Activated CD8-positive, alpha-beta T cell treated with anti-CD3 and anti-CD28 coated beads for 36 hours (primary cell): ENCODE measurements at regions of chr19 and their contacts with region 1.

Region 1: DNA sequence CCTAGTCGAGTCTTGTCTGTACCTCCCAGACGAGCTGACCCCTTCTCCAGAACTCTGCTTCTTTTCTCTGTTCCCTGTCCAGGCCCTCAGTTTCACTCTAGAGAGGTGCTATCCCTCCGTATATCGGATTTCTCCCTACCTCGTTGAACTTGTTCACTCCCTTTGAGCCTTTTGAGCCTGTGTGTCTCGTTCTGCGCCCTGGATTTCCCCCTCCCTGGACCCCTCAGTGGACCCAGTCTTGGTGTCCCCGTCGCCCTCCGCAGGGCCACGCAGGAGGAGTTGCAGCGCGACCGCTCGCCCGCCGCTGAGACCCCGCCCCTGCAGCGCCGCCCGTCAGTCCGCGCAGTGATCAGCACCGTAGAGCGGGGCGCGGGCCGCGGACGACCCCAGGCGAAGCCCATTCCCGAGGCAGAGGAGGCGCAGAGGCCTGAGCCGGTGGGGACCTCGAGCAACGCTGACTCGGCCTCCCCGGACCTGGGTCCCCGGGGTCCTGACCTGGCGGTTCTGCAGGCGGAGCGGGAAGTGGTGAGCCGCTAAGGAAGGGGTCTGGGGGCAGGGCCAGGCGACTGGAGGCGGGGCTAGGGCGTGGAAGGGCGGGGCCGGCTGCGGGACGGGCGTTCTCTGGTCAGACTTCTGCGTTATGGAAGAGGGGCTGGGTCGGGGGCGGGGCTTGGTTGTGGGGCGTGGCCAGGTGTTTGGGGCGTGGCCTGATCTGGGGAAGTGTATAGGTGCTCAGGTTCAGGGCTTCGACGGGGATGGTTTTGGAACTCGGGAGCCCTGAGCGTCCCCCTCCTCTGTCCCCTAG is 5.5 kb downstream of the EPS8L1 start:
- DNase-seq: peak; percentile 94
- ATAC-seq: peak; percentile 82
- H3K4me3 Mint-ChIP-seq: peak overlapping the region; percentile 62
- H3K27ac Mint-ChIP-seq: no peak overlapping the region
- H3K4me1 Mint-ChIP-seq: peaks cover 19% of the 10 kb centered on the region
- H3K27me3 Mint-ChIP-seq: peaks cover 58% of the 10 kb centered on the region
- CTCF ChIP-seq: no peak

Region 2: DNA sequence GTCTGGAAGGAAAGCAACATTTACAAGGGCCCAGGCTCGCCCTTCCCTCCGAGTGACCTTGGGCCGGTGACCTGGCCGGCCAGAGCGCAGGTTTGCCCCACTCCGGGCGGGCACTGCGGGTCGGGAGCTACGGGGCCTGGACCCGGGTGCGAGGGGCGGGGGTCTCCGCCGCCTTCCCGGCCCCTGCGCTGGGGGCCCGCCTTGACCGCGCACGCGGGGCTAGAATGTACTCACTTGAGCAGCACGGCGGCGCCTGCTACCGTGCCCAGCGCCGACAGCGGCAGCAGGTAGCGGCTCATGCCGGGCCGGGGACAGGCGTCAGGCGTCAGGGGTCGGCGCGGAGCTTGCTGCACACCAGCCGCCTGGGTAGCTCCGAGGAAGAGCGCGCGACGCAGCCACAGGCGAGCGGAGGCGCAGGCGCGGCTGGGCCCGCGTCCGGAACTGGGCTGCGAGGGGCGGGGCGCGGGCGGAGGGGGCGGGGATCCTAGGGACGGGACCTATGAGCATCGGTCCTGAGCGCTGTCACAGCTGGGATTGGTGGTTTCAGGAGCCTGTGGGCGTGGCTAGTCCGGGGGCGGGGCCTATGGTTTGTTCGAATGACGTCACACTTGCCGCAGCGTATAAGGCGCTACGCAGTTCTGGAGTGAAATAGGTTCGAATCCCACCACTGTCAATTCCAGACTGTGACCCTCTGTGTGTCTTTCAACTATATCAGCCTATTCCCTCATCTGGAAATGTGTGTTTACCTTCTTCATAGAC is 18.3 kb before region 1 on chr19 and contains the start of gene RDH13:
- CTCF ChIA-PET with region 1: no interaction called
- POLR2A ChIA-PET with region 1: interaction called, 13 read pairs
- intact Hi-C with region 1: no loop called
- DNase-seq: peak; percentile 100
- ATAC-seq: peak; percentile 100
- H3K4me3 Mint-ChIP-seq: peak within 1 kb of the TSS; percentile 86
- H3K27ac Mint-ChIP-seq: peak within 1 kb of the TSS; percentile 81
- H3K4me1 Mint-ChIP-seq: peaks cover 9% of the 10 kb centered on the region
- H3K27me3 Mint-ChIP-seq: peaks cover 18% of the 10 kb centered on the region
- CTCF ChIP-seq: no peak
- total RNA-seq, gene RDH13: 17.3 to 18.2 TPM